Endothelial cell of umbilical vein (primary cell): ENCODE measurements at regions of chr1 and their contacts with region 1.

Region 1: DNA sequence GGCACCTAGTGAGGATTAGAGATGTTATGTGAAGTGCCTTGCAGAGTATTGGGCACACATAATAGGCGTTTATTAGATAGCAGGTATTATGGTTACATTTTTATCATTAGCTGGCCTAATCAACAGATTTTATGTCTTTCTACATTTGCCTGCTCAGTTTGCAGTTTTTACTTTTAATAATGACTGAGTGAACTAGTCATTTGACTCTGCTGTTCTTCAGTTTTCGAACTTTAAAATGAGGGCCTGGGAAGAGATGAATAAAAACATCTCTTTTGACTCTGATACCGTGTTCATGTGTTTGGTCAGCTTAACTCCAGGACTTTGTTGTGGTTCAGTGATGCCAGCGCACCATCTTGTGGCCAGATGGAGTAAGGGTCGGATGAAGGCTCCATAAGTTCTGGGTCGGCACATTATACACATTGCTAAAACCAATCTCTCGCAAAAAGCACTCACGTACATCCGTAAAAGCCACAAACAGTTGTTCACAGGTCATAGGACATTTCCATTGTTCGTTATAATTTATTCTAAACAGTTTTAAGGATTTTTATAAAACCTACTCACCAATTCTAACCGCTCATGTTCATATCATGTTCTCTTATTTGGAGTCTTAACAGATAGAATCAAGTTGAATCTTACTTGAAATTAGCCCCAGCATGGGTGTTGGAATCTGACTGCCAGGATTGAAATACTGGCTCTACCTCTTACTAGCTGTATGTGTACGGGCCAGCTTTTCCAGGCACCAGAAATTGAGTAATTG is 78.4 kb upstream of the GPR88 start:
- DNase-seq: peak; percentile 87
- H3K4me3 ChIP-seq: no peak overlapping the region
- H3K27ac ChIP-seq: no peak overlapping the region
- H3K4me1 ChIP-seq: peaks cover 4% of the 10 kb centered on the region
- H3K27me3 ChIP-seq: no peaks in the 10 kb centered on the region
- CTCF ChIP-seq: peak; percentile 76 to 83
- POLR2A ChIP-seq: no peak

Region 2: DNA sequence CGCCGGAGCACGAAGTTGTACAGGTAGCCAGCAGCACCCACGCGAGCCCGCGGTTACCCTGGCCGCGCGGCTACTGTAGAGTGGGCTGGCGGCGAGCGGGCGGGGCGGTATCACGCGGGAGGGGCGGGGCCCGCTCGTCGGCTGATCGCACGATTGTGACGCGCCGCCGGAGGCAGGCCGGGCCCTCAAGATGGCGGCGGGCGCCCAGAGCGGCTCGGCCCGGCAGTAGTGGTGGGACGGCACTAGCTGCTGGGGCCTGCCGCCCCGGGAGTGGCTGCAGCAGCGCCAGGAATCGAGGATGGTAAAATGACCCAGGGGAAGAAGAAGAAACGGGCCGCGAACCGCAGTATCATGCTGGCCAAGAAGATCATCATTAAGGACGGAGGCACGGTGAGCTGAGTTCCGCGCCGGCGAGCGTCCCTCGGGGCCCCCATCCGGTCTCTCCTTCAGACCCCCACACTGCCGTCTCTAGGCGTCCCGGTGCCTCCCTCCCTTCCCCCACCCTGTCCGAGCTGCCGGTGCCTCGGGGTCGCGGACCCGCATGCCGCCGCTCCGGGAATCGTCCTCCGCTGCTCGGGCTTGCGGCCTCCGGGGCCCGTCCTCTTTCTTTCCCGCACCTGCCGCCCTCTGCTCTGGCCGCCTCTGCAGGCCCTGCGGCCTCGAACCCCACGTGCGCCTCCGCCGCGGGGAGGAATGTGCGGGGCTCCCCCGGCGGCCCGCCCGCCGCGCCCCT is 421.4 kb before region 1 on chr1:
- CTCF ChIA-PET with region 1: interaction called, 7 read pairs
- POLR2A ChIA-PET with region 1: no interaction called
- dilution Hi-C with region 1: no loop called
- intact Hi-C with region 1: loop called (anchors 2 kb)
- DNase-seq: peak; percentile 87
- H3K4me3 ChIP-seq: peak overlapping the region; percentile 80 to 99 (median 95)
- H3K27ac ChIP-seq: peak overlapping the region; percentile 96
- H3K4me1 ChIP-seq: peaks cover 24% of the 10 kb centered on the region
- H3K27me3 ChIP-seq: no peaks in the 10 kb centered on the region
- CTCF ChIP-seq: no peak
- POLR2A ChIP-seq: peak; percentile 96

Region 3: GRCh38 chr1:100152271-100152670 is 307.3 kb before region 1 on chr1:
- CTCF ChIA-PET with region 1: interaction called, 11 read pairs
- POLR2A ChIA-PET with region 1: no interaction called
- dilution Hi-C with region 1: no loop called
- intact Hi-C with region 1: no loop called
- DNase-seq: no peak
- H3K4me3 ChIP-seq: no peak overlapping the region
- H3K27ac ChIP-seq: no peak overlapping the region
- H3K4me1 ChIP-seq: no peaks in the 10 kb centered on the region
- H3K27me3 ChIP-seq: no peaks in the 10 kb centered on the region
- CTCF ChIP-seq: no peak
- POLR2A ChIP-seq: no peak

Region 4: GRCh38 chr1:100351095-100351891 is 108.2 kb before region 1 on chr1:
- CTCF ChIA-PET with region 1: interaction called, 26 read pairs
- POLR2A ChIA-PET with region 1: no interaction called
- dilution Hi-C with region 1: no loop called
- intact Hi-C with region 1: loop called (anchors 1 kb)
- DNase-seq: peak; percentile 96
- H3K4me3 ChIP-seq: peak overlapping the region; percentile 77 to 97 (median 84)
- H3K27ac ChIP-seq: peak overlapping the region; percentile 84
- H3K4me1 ChIP-seq: peaks cover 33% of the 10 kb centered on the region
- H3K27me3 ChIP-seq: no peaks in the 10 kb centered on the region
- CTCF ChIP-seq: peak; percentile 18 to 41
- POLR2A ChIP-seq: peak; percentile 89

Region 5: GRCh38 chr1:100606438-100606837 is 146.9 kb after region 1 on chr1:
- CTCF ChIA-PET with region 1: interaction called, 8 read pairs
- POLR2A ChIA-PET with region 1: no interaction called
- dilution Hi-C with region 1: no loop called
- intact Hi-C with region 1: loop called (anchors 1 kb)
- DNase-seq: peak; percentile 78
- H3K4me3 ChIP-seq: no peak overlapping the region
- H3K27ac ChIP-seq: no peak overlapping the region
- H3K4me1 ChIP-seq: no peaks in the 10 kb centered on the region
- H3K27me3 ChIP-seq: no peaks in the 10 kb centered on the region
- CTCF ChIP-seq: peak; percentile 53 to 63
- POLR2A ChIP-seq: no peak

Region 6: GRCh38 chr1:100649146-100649545 is 189.6 kb after region 1 on chr1:
- CTCF ChIA-PET with region 1: no interaction called
- POLR2A ChIA-PET with region 1: no interaction called
- dilution Hi-C with region 1: no loop called
- intact Hi-C with region 1: no loop called
- DNase-seq: no peak
- H3K4me3 ChIP-seq: no peak overlapping the region
- H3K27ac ChIP-seq: no peak overlapping the region
- H3K4me1 ChIP-seq: no peaks in the 10 kb centered on the region
- H3K27me3 ChIP-seq: no peaks in the 10 kb centered on the region
- CTCF ChIP-seq: no peak
- POLR2A ChIP-seq: no peak